Adrenal gland (tissue), 19 donors: ENCODE measurements at regions of chr12 and their contacts with region 1.

Region 1: GRCh38 chr12:103877934-103878510 is 37.0 kb upstream of the NT5DC3 start:
- DNase-seq: peak; percentile 50 to 75 (median 62)
- H3K4me3 ChIP-seq: no peak overlapping the region
- H3K27ac ChIP-seq: no peak overlapping the region
- H3K4me1 ChIP-seq: no peaks in the 10 kb centered on the region
- H3K27me3 ChIP-seq: no peaks in the 10 kb centered on the region
- CTCF ChIP-seq: peak; percentile 48 to 72 (median 64)
- POLR2A ChIP-seq: no peak

Region 2: GRCh38 chr12:103771466-103771865 is 106.6 kb before region 1 on chr12:
- intact Hi-C with region 1: loop called in 1 of 2 experiments (anchors 5 kb)
- DNase-seq: peak; percentile 32 to 66 (median 57)
- H3K4me3 ChIP-seq: no peak overlapping the region
- H3K27ac ChIP-seq: no peak overlapping the region
- H3K4me1 ChIP-seq: peaks cover 10 to 12% of the 10 kb centered on the region in 2 donors
- H3K27me3 ChIP-seq: no peaks in the 10 kb centered on the region
- CTCF ChIP-seq: peak; percentile 34 to 80 (median 66)
- POLR2A ChIP-seq: no peak

Region 3: GRCh38 chr12:103929046-103929783 is 51.2 kb after region 1 on chr12:
- intact Hi-C with region 1: loop called in 1 of 2 experiments (anchors 10 kb)
- DNase-seq: peak; percentile 84 to 95 (median 92)
- H3K4me3 ChIP-seq: peak overlapping the region in 3 of 4 donors; percentile 25 to 89 (median 49)
- H3K27ac ChIP-seq: peak overlapping the region; percentile 72 to 98 (median 92)
- H3K4me1 ChIP-seq: peaks cover 19 to 25% of the 10 kb centered on the region in 2 donors
- H3K27me3 ChIP-seq: no peaks in the 10 kb centered on the region
- CTCF ChIP-seq: no peak
- POLR2A ChIP-seq: peak; percentile 66 to 75

Region 4: DNA sequence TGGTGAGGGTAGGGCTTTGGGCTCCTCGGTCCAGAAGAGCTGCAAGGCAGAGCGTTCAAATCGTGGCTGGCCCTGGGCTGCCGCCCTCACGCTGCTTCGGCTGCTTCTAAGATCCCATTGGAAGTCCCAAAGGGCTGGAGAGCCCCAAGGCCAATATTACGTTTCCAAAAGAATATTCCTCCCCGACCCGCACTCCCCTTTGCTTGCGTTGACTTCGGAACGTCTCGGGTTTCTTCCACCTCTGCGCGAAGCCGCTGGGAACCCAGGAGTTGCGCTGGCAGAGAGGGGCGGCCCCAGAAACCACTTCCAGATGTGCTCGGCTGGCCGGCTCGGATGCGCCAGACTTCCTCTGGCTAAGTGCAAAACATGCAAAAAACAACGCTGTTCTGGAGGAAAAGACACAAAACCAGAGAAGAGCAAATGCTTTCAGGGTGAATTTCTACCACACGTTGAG is 171.9 kb after region 1 on chr12 and contains the start of gene GLT8D2:
- intact Hi-C with region 1: no loop called
- DNase-seq: peak; percentile 41 to 69 (median 60)
- H3K4me3 ChIP-seq: peak within 1 kb of the TSS in 2 of 4 donors; percentile 11 to 55
- H3K27ac ChIP-seq: peak within 1 kb of the TSS in 4 of 5 donors; percentile 16 to 74 (median 30)
- H3K4me1 ChIP-seq: peaks cover 7 to 12% of the 10 kb centered on the region in 2 donors
- H3K27me3 ChIP-seq: no peaks in the 10 kb centered on the region
- CTCF ChIP-seq: no peak
- POLR2A ChIP-seq: no peak
- total RNA-seq, gene GLT8D2: 6.3 to 21.2 (median 13.9) TPM